ENCODE measurements at regions of chr13 and their contacts with region 1.

Region 1: DNA sequence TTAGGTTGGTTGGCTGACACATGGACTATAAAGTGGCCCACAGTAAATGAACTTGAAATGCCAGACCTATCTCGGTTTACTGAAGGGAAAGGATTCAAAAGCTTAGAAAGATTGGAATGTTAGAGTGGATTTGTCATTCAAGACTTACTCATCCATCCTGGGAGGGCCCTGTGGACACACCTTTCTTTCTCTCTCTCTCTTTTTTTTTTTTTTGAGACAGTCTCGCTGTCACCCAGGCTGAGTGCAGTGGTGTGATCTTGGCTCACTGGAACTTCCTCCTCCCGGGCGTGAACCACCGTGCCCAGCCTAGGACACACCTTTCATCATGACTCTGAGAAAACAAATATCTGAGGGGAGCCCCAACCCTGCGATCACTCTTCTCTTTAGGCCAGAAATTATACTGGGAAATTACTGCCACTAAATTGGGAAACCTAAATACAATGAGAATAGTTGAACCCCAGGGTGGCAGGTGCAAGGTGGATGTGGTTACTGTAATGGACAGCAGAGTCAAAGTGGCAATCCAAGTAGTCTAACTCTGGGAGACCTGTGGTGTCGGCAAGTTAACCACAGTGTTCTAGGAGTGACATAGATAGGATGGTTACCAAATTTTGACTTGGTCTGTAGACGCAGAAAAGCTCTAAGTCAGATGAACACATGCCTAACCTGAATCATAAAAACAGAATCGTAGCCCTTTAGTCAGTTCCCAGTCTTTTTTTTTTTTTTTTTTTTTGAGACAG is 47.1 kb upstream of the ZMYM5 start:
- DNase-seq: peak; percentile 88
- H3K4me3 ChIP-seq: no peak overlapping the region
- H3K27ac ChIP-seq: peak overlapping the region; percentile 57
- H3K4me1 ChIP-seq: peaks cover 9% of the 10 kb centered on the region
- H3K27me3 ChIP-seq: no peaks in the 10 kb centered on the region
- CTCF ChIP-seq: no peak

Region 2: GRCh38 chr13:19737844-19738557 is 172.5 kb before region 1 on chr13:
- CTCF ChIA-PET with region 1: no interaction called
- dilution Hi-C with region 1: no loop called
- in situ Hi-C with region 1: no loop called
- intact Hi-C with region 1: no loop called
- DNase-seq: no peak
- H3K4me3 ChIP-seq: no peak overlapping the region
- H3K27ac ChIP-seq: no peak overlapping the region
- H3K4me1 ChIP-seq: no peaks in the 10 kb centered on the region
- H3K27me3 ChIP-seq: no peaks in the 10 kb centered on the region
- CTCF ChIP-seq: no peak

Region 3: DNA sequence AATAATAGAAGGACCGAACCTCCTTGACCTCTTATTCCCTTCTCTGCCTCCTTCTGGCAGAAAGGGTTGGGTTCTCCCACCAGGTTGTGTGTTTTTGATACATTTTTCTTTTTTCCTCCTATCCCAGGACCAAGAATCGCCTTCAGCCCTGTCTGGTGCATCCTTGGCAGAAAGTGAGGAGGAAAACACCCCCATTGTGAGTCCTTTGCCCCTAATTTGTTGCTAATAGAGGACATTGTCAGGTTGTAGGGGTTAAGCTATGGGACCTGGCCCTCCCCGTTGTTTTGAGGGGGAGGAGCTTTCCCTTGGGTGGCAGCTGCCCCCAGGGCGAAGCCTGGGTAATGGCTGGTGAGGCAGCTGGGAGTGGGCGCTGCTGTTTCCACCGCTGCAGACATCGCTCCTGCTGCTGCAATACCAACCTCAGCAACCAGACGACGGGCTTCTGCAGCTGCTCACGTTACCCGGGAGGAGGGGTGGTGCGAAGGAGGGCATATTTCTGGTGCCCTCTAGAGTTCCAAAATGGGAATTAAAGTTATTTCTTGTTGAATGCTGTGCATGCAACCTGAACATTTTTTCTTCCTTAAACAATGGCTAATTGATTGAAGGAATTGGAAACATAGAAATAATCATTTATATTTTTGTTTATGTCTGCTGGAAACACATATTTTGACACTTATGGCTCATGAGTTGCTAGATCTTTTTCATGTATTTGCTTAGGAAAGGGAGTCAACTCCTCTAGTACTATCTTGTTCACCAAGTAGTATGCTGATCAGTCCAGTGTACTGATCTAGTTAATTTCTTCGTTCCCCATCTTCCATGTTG is 49.5 kb after region 1 on chr13:
- CTCF ChIA-PET with region 1: no interaction called
- dilution Hi-C with region 1: no loop called
- in situ Hi-C with region 1: no loop called
- intact Hi-C with region 1: loop called (anchors 5 kb)
- DNase-seq: peak; percentile 84
- H3K4me3 ChIP-seq: peak overlapping the region; percentile 60 to 96 (median 94)
- H3K27ac ChIP-seq: peak overlapping the region; percentile 78
- H3K4me1 ChIP-seq: peaks cover 23% of the 10 kb centered on the region
- H3K27me3 ChIP-seq: no peaks in the 10 kb centered on the region
- CTCF ChIP-seq: peak; percentile 93 to 96

Region 4: DNA sequence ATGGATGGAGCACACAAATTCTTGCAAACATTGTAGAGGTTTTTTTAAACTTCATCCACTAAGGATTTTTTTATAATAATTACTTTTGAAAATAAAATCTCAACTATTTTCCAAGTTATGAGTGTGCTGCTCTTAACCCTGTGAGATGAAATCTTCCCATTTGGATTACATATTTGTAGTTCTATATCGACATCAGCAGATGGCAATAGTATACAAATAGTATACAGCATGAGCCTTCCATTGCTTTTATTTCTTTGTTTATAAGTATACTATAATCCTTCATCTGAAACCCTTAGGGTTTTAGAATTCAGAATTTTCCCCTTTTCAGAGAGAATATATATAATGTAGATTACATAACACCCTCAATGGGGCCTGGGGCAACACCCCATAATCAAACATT is 179.8 kb after region 1 on chr13:
- CTCF ChIA-PET with region 1: no interaction called
- dilution Hi-C with region 1: no loop called
- in situ Hi-C with region 1: no loop called
- intact Hi-C with region 1: no loop called
- DNase-seq: no peak
- H3K4me3 ChIP-seq: no peak overlapping the region
- H3K27ac ChIP-seq: no peak overlapping the region
- H3K4me1 ChIP-seq: no peaks in the 10 kb centered on the region
- H3K27me3 ChIP-seq: no peaks in the 10 kb centered on the region
- CTCF ChIP-seq: peak in 1 of 2 donors; percentile 31

Measured in mammary epithelial cell (primary cell).